HepG2 (cell line): ENCODE measurements at regions of chr4 and their contacts with region 1.

Region 1: GRCh38 chr4:16824278-16824806 is 74.1 kb downstream of the LDB2 start:
- DNase-seq: peak; percentile 89
- ATAC-seq: peak; percentile 96
- H3K4me3 ChIP-seq: peak overlapping the region in 1 of 3 experiments; percentile 34; a peak in 1 of 6 replicates
- H3K27ac ChIP-seq: peak overlapping the region; percentile 63
- H3K4me1 ChIP-seq: peaks cover 50% of the 10 kb centered on the region
- H3K27me3 ChIP-seq: no peaks in the 10 kb centered on the region
- CTCF ChIP-seq: no peak
- EP300 ChIP-seq: peak in 1 of 2 experiments; percentile 83; a peak in 2 of 4 replicates
- POLR2A ChIP-seq: no peak
- RAD21 ChIP-seq: no peak

Region 2: GRCh38 chr4:16835597-16836247 is 11.4 kb after region 1 on chr4:
- CTCF ChIA-PET with region 1: no interaction called
- POLR2A ChIA-PET with region 1: interaction called, 13 read pairs
- in situ Hi-C with region 1: no loop called
- intact Hi-C with region 1: loop called (anchors 1 kb)
- DNase-seq: peak; percentile 90
- ATAC-seq: peak; percentile 98
- H3K4me3 ChIP-seq: peak overlapping the region in 1 of 3 experiments; percentile 30; a peak in 1 of 6 replicates
- H3K27ac ChIP-seq: peak overlapping the region; percentile 79
- H3K4me1 ChIP-seq: peaks cover 75% of the 10 kb centered on the region
- H3K27me3 ChIP-seq: no peaks in the 10 kb centered on the region
- CTCF ChIP-seq: no peak
- EP300 ChIP-seq: peak in 1 of 2 experiments; percentile 83; a peak in 2 of 4 replicates
- POLR2A ChIP-seq: no peak
- RAD21 ChIP-seq: no peak; the same call in 1 of the 2 replicates

Region 3: DNA sequence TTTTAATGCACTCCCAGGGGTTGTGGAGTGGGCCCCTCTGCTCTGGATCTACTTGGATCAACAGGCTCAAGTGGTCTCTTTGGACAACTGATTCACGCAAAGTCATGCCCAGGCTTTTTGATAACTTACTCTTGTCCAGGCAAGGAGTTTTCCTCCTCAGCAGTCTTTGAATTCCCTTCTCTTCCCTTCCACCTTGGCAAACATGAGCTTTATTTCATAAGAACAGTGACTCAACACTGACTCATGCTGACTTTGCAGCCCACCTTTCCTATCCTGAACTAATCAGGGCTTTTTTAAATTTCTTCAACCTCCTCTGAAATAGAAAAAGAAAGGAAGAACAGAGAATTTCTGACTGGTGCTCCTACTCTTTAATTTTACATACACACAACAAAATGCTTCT is 206.2 kb after region 1 on chr4:
- CTCF ChIA-PET with region 1: no interaction called
- POLR2A ChIA-PET with region 1: no interaction called
- in situ Hi-C with region 1: no loop called
- intact Hi-C with region 1: no loop called
- DNase-seq: no peak
- ATAC-seq: no peak
- H3K4me3 ChIP-seq: no peak overlapping the region
- H3K27ac ChIP-seq: no peak overlapping the region
- H3K4me1 ChIP-seq: no peaks in the 10 kb centered on the region
- H3K27me3 ChIP-seq: peaks cover 0 to 16% of the 10 kb centered on the region in 2 experiments; a peak in 2 of 5 replicates
- CTCF ChIP-seq: no peak
- EP300 ChIP-seq: no peak
- POLR2A ChIP-seq: no peak
- RAD21 ChIP-seq: no peak